Psoas muscle (tissue), 8 donors: ENCODE measurements at regions of chr10 and their contacts with region 1.

Region 1: DNA sequence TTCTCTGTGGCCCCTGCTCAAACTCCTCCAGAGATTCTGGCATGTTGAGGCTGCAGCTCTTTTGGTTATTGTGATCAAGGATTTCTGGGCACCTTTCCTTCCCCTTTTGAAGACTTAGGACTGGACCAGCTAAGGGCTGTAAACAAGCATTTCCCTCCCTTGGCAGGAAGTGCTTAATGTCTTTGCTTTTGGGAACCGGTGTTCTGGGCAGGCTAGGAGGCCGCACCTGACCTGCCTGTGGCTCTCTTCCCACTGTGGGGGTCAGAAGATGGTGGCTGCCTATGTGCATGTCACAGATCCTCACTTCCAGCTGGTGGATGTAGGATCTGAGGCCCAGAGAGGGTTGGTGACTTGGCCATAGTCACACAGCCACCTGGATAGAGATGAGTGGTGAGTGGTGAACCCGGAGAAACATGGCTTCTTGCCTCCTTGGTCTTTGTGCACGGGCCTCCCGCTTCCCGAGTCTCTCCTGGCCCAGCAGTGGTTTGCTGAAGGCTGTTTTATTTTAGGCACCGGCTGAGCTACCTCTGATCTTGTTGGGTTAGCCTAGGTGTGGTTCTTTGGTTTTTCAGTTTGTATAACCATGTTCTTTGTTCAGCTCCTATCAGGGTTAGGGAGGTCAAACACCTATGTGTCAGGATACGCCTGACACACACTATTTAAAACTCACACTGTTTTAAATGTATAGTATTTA is 82.0 kb downstream of the GRK5 start:
- DNase-seq: no peak
- ATAC-seq: no peak
- H3K4me3 ChIP-seq: no peak overlapping the region
- H3K27ac ChIP-seq: peak overlapping the region; percentile 55
- H3K4me1 ChIP-seq: peaks cover 29% of the 10 kb centered on the region
- H3K27me3 ChIP-seq: no peaks in the 10 kb centered on the region
- CTCF ChIP-seq: no peak

Region 2: DNA sequence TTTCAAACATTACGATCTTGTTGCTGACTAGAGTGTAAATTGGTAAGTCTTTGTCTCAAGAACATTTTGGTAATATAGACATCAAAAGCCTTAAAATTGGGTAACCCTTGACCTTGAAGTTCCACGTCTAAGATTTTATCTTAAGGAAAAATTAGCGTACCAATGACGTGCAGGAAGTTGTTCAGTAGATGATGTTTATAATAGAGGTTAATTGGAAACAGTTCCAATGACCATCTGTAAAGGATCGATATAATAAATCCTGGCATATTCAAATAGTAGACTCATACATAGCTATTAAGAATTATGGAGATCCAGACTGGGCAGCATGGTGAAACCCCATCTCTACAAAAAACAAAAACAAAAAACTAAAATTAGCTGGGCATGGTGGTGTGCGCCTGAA is 61.5 kb before region 1 on chr10:
- intact Hi-C with region 1: loop called in 1 of 2 experiments (anchors 2 kb)
- DNase-seq: no peak
- ATAC-seq: no peak
- H3K4me3 ChIP-seq: no peak overlapping the region
- H3K27ac ChIP-seq: no peak overlapping the region
- H3K4me1 ChIP-seq: no peaks in the 10 kb centered on the region
- H3K27me3 ChIP-seq: no peaks in the 10 kb centered on the region
- CTCF ChIP-seq: no peak